ENCODE measurements at regions of chr11 and their contacts with region 1.

Region 1: DNA sequence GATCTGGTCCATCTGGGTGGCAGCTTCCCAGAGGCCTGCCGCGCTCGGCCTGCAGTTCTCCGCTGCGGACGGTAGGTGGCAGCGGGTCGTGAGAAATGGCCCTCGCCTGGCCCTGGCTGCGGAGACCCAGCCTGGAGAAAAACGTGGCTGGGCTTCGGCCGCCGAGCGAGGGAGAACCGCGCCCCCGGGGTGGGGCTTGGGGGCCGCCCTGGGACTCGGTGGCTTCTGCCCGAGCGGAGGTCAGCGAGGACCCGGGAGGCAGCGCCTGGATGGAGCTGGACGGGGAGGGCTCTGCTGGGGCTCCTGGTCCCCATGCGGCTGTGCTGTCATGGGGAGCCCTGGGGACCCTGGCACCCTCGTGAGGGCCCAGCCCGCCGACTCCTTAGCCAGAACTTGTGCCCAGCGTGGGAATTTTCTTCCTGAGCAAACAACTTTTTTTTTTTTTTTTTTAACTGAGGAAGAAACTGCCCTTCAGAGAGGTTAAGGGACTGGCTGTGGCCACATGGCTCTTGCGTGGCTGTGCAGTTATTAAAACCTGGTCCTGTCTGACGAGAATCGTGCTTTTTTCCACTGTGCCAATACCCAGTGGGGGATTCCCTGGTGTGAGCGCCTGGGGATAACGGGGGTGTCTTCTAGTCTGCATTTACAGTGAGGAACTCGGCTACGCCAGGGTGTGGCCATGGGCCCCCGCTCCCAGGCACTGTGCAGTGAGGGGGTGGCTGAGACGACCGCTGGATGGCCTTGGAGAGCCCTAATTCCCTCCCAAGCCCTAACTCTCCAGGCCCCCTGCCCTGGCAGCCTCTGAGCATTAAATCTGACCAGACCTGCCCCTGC is 535.6 kb downstream of the INSC start:
- DNase-seq: peak; percentile 96
- H3K4me3 ChIP-seq: peak overlapping the region; percentile 34 to 40
- H3K27ac ChIP-seq: peak overlapping the region in 1 of 2 experiments; percentile 87; a peak in 2 of 4 replicates
- H3K4me1 ChIP-seq: peaks cover 0 to 20% of the 10 kb centered on the region in 2 experiments; a peak in 2 of 4 replicates
- H3K27me3 ChIP-seq: no peaks in the 10 kb centered on the region
- CTCF ChIP-seq: peak; percentile 77
- EP300 ChIP-seq: peak in 1 of 2 experiments; percentile 38; a peak in 1 of 4 replicates
- RAD21 ChIP-seq: peak; percentile 96

Region 2: DNA sequence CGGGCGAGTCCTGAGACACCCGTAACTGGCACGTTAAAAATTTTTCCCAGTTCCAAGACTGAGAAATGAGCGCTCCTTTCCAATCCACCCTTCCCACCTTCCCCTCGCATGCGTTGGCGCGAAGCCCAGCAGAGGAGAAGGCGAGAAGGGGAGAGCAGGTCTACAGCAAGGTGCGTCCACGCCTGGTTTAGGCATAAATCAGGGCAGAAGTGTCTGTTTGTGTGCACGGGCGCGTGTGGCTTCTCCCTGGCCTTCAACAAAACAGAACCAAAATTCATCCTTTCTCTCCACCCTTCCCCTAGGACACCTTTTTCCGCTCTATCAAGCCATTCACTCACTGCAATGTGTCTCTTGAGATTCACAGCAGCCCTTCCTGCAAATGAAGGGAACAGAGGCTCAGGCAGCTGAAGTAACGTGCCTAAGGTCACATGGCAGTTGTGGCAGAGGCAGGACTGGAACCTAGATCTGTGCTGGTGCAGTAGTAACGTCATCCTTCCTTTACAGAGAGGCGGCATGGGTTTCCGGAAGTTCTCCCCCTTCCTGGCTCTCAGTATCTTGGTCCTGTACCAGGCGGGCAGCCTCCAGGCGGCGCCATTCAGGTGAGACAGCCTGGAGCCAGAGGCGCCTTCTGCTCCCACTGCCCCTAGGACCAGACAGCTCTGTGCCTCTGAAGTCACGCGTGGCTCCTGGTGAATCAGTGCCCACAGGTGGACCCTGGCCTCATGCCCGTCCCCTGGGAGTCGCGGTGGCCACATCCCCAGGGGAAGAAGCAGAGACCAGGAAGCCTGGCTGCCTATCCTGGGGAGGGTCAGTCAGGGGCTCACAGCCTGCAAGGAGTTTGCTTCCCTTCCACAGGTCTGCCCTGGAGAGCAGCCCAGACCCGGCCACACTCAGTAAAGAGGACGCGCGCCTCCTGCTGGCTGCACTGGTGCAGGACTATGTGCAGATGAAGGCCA is 575.8 kb before region 1 on chr11:
- CTCF ChIA-PET with region 1: no interaction called
- POLR2A ChIA-PET with region 1: no interaction called
- DNase-seq: peak; percentile 83
- H3K4me3 ChIP-seq: peak overlapping the region; percentile 50 to 57
- H3K27ac ChIP-seq: no peak overlapping the region; a peak in 1 of 4 replicates
- H3K4me1 ChIP-seq: peaks cover 0 to 15% of the 10 kb centered on the region in 2 experiments; a peak in 1 of 4 replicates
- H3K27me3 ChIP-seq: peaks cover 17% of the 10 kb centered on the region
- CTCF ChIP-seq: peak; percentile 70
- EP300 ChIP-seq: no peak
- RAD21 ChIP-seq: peak; percentile 83

Region 3: GRCh38 chr11:15327786-15328231 is 322.5 kb before region 1 on chr11:
- CTCF ChIA-PET with region 1: interaction called, 27 read pairs
- POLR2A ChIA-PET with region 1: interaction called, 3 read pairs
- DNase-seq: peak; percentile 68
- H3K4me3 ChIP-seq: no peak overlapping the region; a peak in 1 of 4 replicates
- H3K27ac ChIP-seq: peak overlapping the region in 1 of 2 experiments; percentile 39; a peak in 1 of 4 replicates
- H3K4me1 ChIP-seq: peaks cover 0 to 8% of the 10 kb centered on the region in 2 experiments; a peak in 2 of 4 replicates
- H3K27me3 ChIP-seq: no peaks in the 10 kb centered on the region
- CTCF ChIP-seq: peak; percentile 22; the same call in 1 of the 2 replicates
- EP300 ChIP-seq: no peak; a peak in 1 of 4 replicates
- RAD21 ChIP-seq: peak; percentile 92

Region 4: GRCh38 chr11:15622231-15622890 is 28.0 kb before region 1 on chr11:
- CTCF ChIA-PET with region 1: interaction called, 16 read pairs
- POLR2A ChIA-PET with region 1: interaction called, 8 read pairs
- DNase-seq: no peak
- H3K4me3 ChIP-seq: no peak overlapping the region
- H3K27ac ChIP-seq: peak overlapping the region in 1 of 2 experiments; percentile 100; a peak in 2 of 4 replicates
- H3K4me1 ChIP-seq: peaks cover 0 to 46% of the 10 kb centered on the region in 2 experiments; a peak in 2 of 4 replicates
- H3K27me3 ChIP-seq: no peaks in the 10 kb centered on the region
- CTCF ChIP-seq: no peak
- EP300 ChIP-seq: no peak
- RAD21 ChIP-seq: no peak

Region 5: GRCh38 chr11:15826826-15827225 is 176.5 kb after region 1 on chr11:
- CTCF ChIA-PET with region 1: interaction called, 11 read pairs
- POLR2A ChIA-PET with region 1: no interaction called
- DNase-seq: peak; percentile 63
- H3K4me3 ChIP-seq: no peak overlapping the region
- H3K27ac ChIP-seq: no peak overlapping the region; a peak in 1 of 4 replicates
- H3K4me1 ChIP-seq: peaks cover 0 to 11% of the 10 kb centered on the region in 2 experiments; a peak in 1 of 4 replicates
- H3K27me3 ChIP-seq: no peaks in the 10 kb centered on the region; the same call in 1 of the 2 replicates
- CTCF ChIP-seq: peak; percentile 61
- EP300 ChIP-seq: no peak
- RAD21 ChIP-seq: peak; percentile 86

Region 6: DNA sequence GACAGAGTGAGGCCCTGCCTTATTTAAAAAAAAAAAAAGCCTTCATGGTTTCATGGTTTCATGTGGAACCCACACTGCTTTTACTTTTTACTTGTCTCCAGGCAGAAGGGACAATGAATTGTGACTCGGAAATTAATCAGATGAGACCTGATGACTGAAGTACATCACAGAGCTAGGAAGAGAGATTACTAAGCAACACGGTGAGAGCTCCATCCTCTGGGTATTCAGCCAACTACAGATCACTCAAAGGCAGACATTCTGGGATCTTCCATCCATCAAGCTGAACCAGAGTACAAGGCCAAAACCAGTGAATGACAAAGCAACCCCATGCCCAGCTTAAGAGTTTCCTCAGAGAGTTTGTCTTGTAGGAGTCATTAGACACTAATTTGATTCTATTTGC is 272.9 kb after region 1 on chr11:
- CTCF ChIA-PET with region 1: interaction called, 10 read pairs
- POLR2A ChIA-PET with region 1: interaction called, 4 read pairs
- DNase-seq: peak; percentile 44
- H3K4me3 ChIP-seq: no peak overlapping the region
- H3K27ac ChIP-seq: no peak overlapping the region
- H3K4me1 ChIP-seq: peaks cover 0 to 4% of the 10 kb centered on the region in 2 experiments; a peak in 1 of 4 replicates
- H3K27me3 ChIP-seq: no peaks in the 10 kb centered on the region
- CTCF ChIP-seq: no peak
- EP300 ChIP-seq: no peak
- RAD21 ChIP-seq: peak; percentile 60